ENCODE measurements at regions of chr10 and their contacts with region 1.

Region 1: GRCh38 chr10:74419958-74420375 is 268.9 kb downstream of the ADK start:
- DNase-seq: peak; percentile 21
- H3K4me3 Mint-ChIP-seq: no peak overlapping the region
- H3K27ac Mint-ChIP-seq: no peak overlapping the region
- H3K4me1 Mint-ChIP-seq: peaks cover 10% of the 10 kb centered on the region
- H3K27me3 Mint-ChIP-seq: no peaks in the 10 kb centered on the region

Region 2: GRCh38 chr10:74337330-74338016 is 82.5 kb before region 1 on chr10:
- CTCF ChIA-PET with region 1: no interaction called
- POLR2A ChIA-PET with region 1: no interaction called
- DNase-seq: no peak
- H3K4me3 Mint-ChIP-seq: no peak overlapping the region
- H3K27ac Mint-ChIP-seq: no peak overlapping the region
- H3K4me1 Mint-ChIP-seq: peaks cover 2% of the 10 kb centered on the region
- H3K27me3 Mint-ChIP-seq: no peaks in the 10 kb centered on the region

Region 3: GRCh38 chr10:74432841-74433594 is 13.1 kb after region 1 on chr10:
- CTCF ChIA-PET with region 1: interaction called, 12 read pairs
- POLR2A ChIA-PET with region 1: interaction called, 3 read pairs
- DNase-seq: no peak
- H3K4me3 Mint-ChIP-seq: no peak overlapping the region
- H3K27ac Mint-ChIP-seq: no peak overlapping the region
- H3K4me1 Mint-ChIP-seq: no peaks in the 10 kb centered on the region
- H3K27me3 Mint-ChIP-seq: no peaks in the 10 kb centered on the region

Region 4: GRCh38 chr10:74738985-74739567 is 319.1 kb after region 1 on chr10:
- CTCF ChIA-PET with region 1: interaction called, 13 read pairs
- POLR2A ChIA-PET with region 1: no interaction called
- DNase-seq: peak; percentile 71
- H3K4me3 Mint-ChIP-seq: peak overlapping the region; percentile 24
- H3K27ac Mint-ChIP-seq: peak overlapping the region; percentile 83
- H3K4me1 Mint-ChIP-seq: peaks cover 24% of the 10 kb centered on the region
- H3K27me3 Mint-ChIP-seq: no peaks in the 10 kb centered on the region

Measured in activated CD4-positive, alpha-beta memory T cell treated with anti-CD3 and anti-CD28 coated beads, Interleukin-2, amount 10 ng/mL, durations not matched to agents 7 days and 5 days (primary cell).